ENCODE measurements at regions of chr11 and their contacts with region 1.

Region 1: DNA sequence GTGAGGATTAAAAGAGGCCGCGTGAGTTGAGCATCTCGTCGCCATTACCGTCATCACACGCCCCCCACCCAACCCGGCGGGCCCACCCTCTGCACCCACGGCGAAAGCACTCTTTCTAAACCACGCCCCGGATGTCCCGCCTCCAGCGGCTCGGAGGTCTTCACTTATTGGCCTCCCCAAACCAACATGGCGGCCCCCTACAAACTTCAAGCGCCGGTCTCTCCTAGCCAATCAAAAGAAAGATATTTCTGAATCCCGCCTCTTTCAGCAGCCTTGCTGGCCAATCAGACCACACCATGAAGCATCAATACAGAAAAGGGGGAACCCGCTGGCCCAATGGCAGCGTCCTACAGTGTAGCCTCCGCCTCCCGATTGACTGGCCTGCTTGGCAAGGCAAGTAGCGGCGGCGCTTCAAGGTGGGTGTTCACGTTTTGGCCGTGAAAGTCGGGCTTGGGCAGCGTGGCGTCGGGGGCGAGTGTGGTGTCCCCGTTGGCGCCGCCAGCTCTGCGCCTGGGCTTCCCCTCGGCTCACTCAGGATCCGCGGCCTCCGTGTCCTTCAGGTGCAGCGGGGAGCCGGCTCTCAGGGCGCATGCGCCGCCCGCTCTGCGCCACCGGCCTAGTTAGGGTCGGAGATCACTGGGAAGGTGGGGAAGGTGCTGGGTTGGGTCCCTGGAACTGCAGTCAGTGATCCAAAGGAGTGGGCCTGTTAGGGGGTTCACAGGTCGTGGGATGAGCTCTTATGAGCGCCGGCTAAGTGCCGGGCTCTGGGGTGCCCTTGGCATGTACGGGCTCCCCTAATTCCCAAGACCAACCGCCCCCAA is at the start of gene NDUFS8:
- H3K4me3 Mint-ChIP-seq: peak within 1 kb of the TSS; percentile 77
- H3K27ac Mint-ChIP-seq: peak within 1 kb of the TSS; percentile 93
- H3K4me1 Mint-ChIP-seq: peaks cover 55% of the 10 kb centered on the region
- H3K27me3 Mint-ChIP-seq: no peaks in the 10 kb centered on the region

Region 2: DNA sequence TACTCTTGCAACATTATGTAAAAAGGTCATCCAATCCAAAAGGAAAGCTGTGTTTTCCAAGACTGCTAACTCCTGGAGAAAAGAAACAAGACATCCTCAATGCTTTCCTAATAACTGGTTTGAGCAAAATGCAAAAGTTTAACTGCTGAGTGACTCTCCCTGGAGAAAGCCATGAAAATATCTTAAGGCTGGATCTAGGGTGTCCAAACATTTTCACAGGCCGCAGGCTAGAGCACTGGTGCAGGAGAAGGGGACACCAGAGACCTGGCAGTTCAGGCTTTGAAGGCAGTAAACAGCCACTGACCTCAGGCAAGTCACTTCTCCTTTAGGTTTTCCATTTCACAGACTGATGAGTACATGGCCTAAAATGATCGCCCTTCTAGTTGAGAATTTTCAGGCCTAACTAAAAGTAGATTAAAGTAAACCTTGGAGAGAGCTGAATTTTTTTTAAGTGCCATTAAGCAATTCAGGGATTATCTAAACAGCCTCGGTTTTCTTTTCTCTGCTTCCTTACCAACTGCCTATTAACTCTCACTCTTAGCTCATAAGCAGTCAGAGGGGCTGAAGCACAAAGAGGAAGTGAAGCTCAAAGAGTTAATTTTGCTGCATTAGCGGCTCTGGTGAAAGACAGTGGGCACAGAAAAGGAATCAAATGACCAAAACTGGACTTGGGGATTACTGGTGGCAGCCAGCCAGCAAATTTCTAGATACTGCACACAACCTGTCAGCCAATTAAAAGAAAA is 88.3 kb after region 1 on chr11:
- intact Hi-C with region 1: loop called (anchors 10 kb)
- H3K4me3 Mint-ChIP-seq: peak overlapping the region; percentile 79
- H3K27ac Mint-ChIP-seq: peak overlapping the region; percentile 84
- H3K4me1 Mint-ChIP-seq: peaks cover 55% of the 10 kb centered on the region
- H3K27me3 Mint-ChIP-seq: no peaks in the 10 kb centered on the region

Measured in dendritic cell treated with granulocyte-macrophage colony-stimulating factor and Interleukin-4, amounts not matched to agents 40 ng/mL and 50 ng/mL, for 4 days (primary cell).